Activated CD4-positive, alpha-beta T cell treated with anti-CD3 and anti-CD28 coated beads, Interleukin-2, amount 10 ng/mL, durations not matched to agents 7 days and 5 days (primary cell): ENCODE measurements at regions of chr4 and their contacts with region 1.

Region 1: DNA sequence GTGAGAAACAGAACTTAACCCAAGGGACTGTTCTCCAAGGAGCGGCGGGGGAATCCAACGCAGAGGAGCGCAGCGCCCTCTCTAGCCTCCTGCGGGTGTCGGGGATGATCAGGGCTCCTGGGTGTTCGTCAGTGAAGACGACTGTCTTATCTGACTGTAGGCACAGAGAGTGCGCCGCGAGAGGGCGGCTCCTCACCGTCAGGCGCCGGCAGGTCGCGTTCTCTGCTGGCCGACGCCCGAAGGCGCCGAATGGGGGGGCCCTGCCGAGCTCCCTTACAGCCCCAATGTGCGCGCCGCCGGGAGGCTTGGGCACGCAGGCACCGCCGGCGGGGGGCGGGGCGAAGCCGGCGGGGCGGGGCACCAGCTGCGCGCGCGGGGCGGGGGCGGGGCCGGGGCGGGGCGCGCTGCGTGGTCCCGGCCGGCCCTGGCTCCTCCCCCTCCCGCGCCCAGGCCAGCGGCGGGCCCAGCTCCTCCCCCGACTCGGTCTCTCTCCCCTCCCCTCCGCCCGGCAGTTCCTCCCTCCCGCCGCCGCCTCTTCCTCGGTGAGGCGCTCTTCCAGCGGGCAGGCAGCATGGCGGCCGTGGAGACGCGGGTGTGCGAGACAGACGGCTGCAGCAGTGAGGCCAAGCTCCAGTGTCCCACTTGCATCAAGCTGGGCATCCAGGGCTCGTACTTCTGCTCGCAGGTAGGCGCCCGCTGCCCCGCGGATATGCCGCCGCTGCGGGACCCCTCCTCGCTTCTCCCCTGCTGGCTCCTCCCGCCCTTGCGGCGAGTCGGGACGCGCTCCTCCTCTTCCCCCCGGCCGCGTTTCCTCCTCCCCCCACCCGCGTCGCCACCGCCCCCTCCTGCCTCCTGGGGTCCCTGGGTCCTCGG is at the start of gene METAP1:
- DNase-seq: peak; percentile 96
- H3K4me3 Mint-ChIP-seq: peak within 1 kb of the TSS; percentile 83
- H3K27ac Mint-ChIP-seq: peak within 1 kb of the TSS; percentile 99
- H3K4me1 Mint-ChIP-seq: peaks cover 36% of the 10 kb centered on the region
- H3K27me3 Mint-ChIP-seq: no peaks in the 10 kb centered on the region
- total RNA-seq, gene METAP1: 49.2 to 59.7 TPM

Region 2: GRCh38 chr4:98864560-98864959 is 130.9 kb before region 1 on chr4:
- CTCF ChIA-PET with region 1: no interaction called
- POLR2A ChIA-PET with region 1: no interaction called
- DNase-seq: no peak
- H3K4me3 Mint-ChIP-seq: no peak overlapping the region
- H3K27ac Mint-ChIP-seq: no peak overlapping the region
- H3K4me1 Mint-ChIP-seq: no peaks in the 10 kb centered on the region
- H3K27me3 Mint-ChIP-seq: peaks cover 2% of the 10 kb centered on the region

Region 3: GRCh38 chr4:98928505-98929340 is 66.7 kb before region 1 on chr4 and contains the start of gene EIF4E:
- CTCF ChIA-PET with region 1: interaction called, 16 read pairs
- POLR2A ChIA-PET with region 1: interaction called, 3 read pairs
- DNase-seq: peak; percentile 98
- H3K4me3 Mint-ChIP-seq: peak within 1 kb of the TSS; percentile 87
- H3K27ac Mint-ChIP-seq: peak within 1 kb of the TSS; percentile 96
- H3K4me1 Mint-ChIP-seq: peaks cover 39% of the 10 kb centered on the region
- H3K27me3 Mint-ChIP-seq: no peaks in the 10 kb centered on the region
- total RNA-seq, gene EIF4E: 83.7 to 101 TPM

Region 4: DNA sequence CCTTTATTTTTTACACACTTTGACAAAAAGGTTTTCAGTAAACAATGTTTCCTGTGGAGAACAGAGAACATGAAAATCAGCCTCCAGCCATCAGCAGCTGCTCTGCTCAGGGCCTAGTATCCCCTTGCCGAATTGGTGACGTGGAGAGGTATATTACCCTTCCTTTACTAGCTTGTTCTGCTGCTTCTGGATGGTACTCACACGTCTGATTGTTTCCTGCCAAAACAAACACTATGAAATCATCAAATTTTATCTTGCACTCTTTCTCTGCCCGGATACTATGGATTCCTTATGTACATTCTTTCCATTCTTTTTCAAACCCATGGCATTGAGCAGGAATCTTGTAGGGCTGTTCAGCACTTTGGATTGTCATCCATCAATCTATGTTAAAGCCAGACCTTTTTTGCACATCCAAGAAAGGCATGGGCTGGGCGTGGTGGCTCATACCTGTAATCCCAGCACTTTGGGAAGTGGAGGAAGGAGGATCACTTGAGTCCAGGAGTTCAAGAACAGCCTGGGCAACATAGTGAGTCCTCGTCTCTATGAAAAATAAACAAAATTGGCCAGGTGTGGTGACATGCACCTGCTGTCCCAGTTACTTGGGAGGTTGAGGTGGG is 18.6 kb before region 1 on chr4:
- CTCF ChIA-PET with region 1: interaction called, 10 read pairs
- POLR2A ChIA-PET with region 1: no interaction called
- DNase-seq: no peak
- H3K4me3 Mint-ChIP-seq: no peak overlapping the region
- H3K27ac Mint-ChIP-seq: no peak overlapping the region
- H3K4me1 Mint-ChIP-seq: no peaks in the 10 kb centered on the region
- H3K27me3 Mint-ChIP-seq: peaks cover 8% of the 10 kb centered on the region